PC-9 (cell line): ENCODE measurements at regions of chr16 and their contacts with region 1.

Region 1: GRCh38 chr16:13245713-13246377 is 344.4 kb downstream of the SHISA9 start:
- DNase-seq: no peak
- H3K4me3 ChIP-seq: no peak overlapping the region
- H3K27ac ChIP-seq: no peak overlapping the region
- H3K4me1 ChIP-seq: no peaks in the 10 kb centered on the region
- H3K27me3 ChIP-seq: no peaks in the 10 kb centered on the region
- CTCF ChIP-seq: no peak

Region 2: DNA sequence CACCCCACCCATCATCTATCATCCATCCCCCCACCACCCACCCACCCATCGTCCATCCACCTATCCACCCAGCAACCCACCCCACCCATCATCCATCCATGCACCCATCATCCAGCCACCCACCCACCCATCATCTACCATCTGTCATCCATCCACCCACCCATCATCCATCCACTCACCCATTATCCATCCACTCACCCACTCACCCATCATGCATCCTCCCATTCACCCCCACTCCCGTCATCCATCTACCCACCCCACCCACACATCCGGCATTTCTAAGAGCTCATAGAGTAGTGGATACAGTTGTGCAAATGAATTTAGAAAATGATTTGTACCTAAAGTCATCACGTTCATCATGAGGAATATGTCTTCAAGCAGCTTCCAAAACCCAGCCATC is 864.2 kb before region 1 on chr16:
- CTCF ChIA-PET with region 1: no interaction called
- POLR2A ChIA-PET with region 1: interaction called, 10 read pairs
- intact Hi-C with region 1: no loop called
- DNase-seq: no peak
- H3K4me3 ChIP-seq: no peak overlapping the region
- H3K27ac ChIP-seq: no peak overlapping the region
- H3K4me1 ChIP-seq: peaks cover 4% of the 10 kb centered on the region; the same call in 1 of the 2 replicates
- H3K27me3 ChIP-seq: no peaks in the 10 kb centered on the region
- CTCF ChIP-seq: no peak

Region 3: GRCh38 chr16:12819126-12820117 is 426.4 kb before region 1 on chr16:
- CTCF ChIA-PET with region 1: no interaction called
- POLR2A ChIA-PET with region 1: no interaction called
- intact Hi-C with region 1: no loop called
- DNase-seq: no peak
- H3K4me3 ChIP-seq: no peak overlapping the region
- H3K27ac ChIP-seq: no peak overlapping the region
- H3K4me1 ChIP-seq: peaks cover 21% of the 10 kb centered on the region
- H3K27me3 ChIP-seq: no peaks in the 10 kb centered on the region
- CTCF ChIP-seq: peak; percentile 57